Left cardiac atrium (tissue), 4 donors: ENCODE measurements at regions of chr16 and their contacts with region 1.

Region 1: GRCh38 chr16:24010440-24011089 is 174.8 kb downstream of the PRKCB start:
- DNase-seq: peak; percentile 84
- ATAC-seq: peak; percentile 70 to 76

Region 2: DNA sequence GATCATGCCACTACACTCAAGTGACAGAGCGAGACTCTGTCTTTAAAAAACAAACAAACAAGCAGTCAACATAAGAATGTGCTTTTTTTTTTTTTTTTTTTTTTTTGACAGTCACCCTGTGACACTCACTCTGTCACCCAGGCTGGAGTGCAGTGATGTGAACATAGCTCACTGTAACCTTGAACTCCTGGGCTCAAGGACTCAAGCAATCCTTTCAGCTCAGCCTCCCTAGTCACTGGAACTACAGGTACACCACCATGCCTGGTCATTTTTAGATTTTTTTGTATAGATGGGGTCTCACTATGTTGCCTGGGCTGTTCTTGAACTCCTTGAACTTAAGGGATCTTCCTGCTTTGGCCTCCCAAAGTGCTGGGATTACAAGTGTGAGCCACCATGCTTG is 271.0 kb before region 1 on chr16:
- intact Hi-C with region 1: loop called (anchors 5 to 10 kb)
- DNase-seq: no peak
- ATAC-seq: no peak

Region 3: GRCh38 chr16:23803591-23804123 is 206.9 kb before region 1 on chr16:
- intact Hi-C with region 1: loop called (anchors 5 to 10 kb)
- DNase-seq: peak; percentile 42
- ATAC-seq: peak in 1 of 2 donors; percentile 65

Region 4: DNA sequence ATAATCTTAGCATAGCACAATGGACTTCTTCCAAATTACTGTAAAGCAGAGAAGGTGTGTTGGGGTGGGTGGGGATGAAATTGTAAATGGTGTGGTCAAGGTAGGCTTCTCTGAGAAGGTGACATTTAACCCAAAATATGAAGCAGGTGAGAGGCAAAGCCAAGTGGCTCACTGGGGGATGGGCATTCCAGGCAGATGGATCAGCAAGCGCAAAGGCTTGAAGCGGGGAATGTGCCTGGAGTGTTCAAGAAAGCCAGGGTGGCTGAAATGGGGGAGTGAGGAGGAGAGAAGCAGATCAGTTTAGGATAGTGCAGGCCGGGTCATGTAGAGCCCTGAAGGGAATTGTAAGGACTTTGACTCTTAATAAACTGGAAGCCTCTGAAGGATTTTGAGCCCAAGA is 260.2 kb after region 1 on chr16:
- intact Hi-C with region 1: no loop called
- DNase-seq: no peak
- ATAC-seq: no peak